ENCODE measurements at regions of chr3 and their contacts with region 1.

Region 1: GRCh38 chr3:20023623-20024405 is 11.8 kb upstream of the PP2D1 start:
- DNase-seq: peak; percentile 22 to 68 (median 50)
- ATAC-seq: peak; percentile 90 to 92
- H3K4me3 ChIP-seq: no peak overlapping the region
- H3K27ac ChIP-seq: peak overlapping the region; percentile 87
- H3K4me1 ChIP-seq: peaks cover 1% of the 10 kb centered on the region
- H3K27me3 ChIP-seq: no peaks in the 10 kb centered on the region

Region 2: DNA sequence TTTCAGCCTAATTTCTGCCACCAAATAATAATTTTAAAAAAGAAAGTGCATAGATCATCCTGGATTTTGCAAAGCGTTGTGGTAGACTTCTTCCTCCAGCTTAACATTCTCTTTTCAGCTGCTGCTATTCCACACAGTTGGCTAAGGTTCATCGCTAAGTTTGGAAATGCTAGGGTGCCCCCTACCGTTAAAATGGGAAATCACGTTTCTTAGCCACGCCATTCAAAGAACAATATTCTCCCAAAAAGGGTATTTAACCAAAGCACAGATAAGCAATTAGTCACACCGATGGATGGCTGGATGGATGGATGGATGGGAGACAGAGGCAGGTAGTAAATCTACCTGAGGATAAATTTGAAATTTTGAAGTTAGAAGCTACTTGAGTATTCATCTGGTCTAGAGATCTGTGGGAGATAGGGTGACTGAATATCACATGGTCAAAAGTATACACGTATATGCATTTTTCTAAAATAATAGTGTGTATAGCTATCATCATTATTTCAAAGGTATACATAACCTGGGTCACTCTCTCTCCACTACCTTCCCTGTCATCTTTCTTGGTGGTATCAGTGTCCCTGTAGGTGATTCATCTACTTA is 157.0 kb before region 1 on chr3:
- intact Hi-C with region 1: no loop called
- DNase-seq: no peak
- ATAC-seq: peak; percentile 22 to 50
- H3K4me3 ChIP-seq: no peak overlapping the region
- H3K27ac ChIP-seq: no peak overlapping the region
- H3K4me1 ChIP-seq: no peaks in the 10 kb centered on the region
- H3K27me3 ChIP-seq: no peaks in the 10 kb centered on the region

Region 3: DNA sequence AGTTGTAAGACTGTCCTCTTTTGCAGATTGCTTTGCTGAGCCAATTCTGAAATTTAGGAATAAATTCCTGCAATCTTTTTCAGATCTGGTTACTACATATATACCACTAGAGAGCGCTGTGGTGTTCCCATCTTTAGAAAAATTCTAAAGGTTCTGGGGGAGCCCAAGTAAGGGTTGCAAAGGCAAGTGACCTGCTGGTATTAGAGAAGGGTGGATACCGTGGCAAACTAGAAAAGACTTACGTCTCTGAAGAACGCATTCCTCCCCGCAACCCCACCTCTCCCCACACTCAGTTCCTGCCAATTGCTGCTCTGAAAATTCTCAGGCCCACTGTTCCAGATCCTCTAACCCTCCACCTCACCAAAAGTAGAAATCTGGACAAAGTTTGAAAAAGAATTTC is 138.3 kb before region 1 on chr3:
- intact Hi-C with region 1: loop called in 1 of 4 experiments (anchors 10 kb)
- DNase-seq: no peak
- ATAC-seq: peak in 1 of 2 donors; percentile 26
- H3K4me3 ChIP-seq: no peak overlapping the region
- H3K27ac ChIP-seq: no peak overlapping the region
- H3K4me1 ChIP-seq: peaks cover 1% of the 10 kb centered on the region
- H3K27me3 ChIP-seq: no peaks in the 10 kb centered on the region

Region 4: GRCh38 chr3:20546413-20547035 is 522.7 kb after region 1 on chr3:
- intact Hi-C with region 1: no loop called
- DNase-seq: no peak
- ATAC-seq: no peak
- H3K4me3 ChIP-seq: no peak overlapping the region
- H3K27ac ChIP-seq: no peak overlapping the region
- H3K4me1 ChIP-seq: no peaks in the 10 kb centered on the region
- H3K27me3 ChIP-seq: no peaks in the 10 kb centered on the region